Sigmoid colon (tissue), 7 donors: ENCODE measurements at regions of chr2 and their contacts with region 1.

Region 1: DNA sequence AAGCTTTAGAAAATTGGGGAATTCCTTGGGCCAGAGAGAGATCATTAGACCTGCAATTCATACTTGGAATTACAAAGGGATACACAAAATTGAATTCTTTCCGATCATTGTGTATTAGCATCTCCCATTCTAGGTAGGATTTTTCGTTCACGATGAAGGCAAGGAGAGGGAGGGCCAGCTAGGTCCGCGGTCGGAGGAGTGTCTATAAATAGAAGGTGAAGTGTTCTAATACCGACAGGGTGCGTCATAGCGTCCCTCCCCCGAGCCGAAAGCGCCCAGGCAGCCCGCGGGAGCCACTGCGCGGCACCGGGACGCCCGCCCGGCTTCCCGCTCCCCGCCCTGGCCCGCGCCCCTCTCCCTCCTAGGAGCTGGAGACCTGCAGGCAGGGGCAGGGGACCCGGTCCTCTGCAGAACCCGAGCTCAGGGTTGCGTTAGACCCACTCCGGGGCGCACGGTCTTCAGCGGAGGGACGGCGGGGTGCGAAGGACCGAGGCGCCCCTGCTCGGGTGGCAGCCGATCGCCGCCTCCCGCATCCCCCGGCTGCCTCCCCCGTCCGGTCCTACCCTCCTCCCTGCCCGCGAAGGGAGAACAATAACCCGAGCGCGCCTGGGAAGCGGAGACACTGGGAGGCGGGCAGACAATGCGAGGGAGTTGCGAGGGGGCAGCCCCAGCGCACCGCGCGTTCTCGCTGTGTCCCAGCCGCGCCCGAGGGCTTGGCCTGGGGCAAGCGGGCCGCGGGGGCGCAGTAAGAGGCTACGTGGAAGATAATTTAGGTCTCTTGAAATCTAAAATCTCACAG is 114.2 kb upstream of the SERTAD2 start:
- DNase-seq: peak; percentile 97
- H3K4me3 ChIP-seq: peak overlapping the region; percentile 60 to 69 (median 65)
- H3K27ac ChIP-seq: peak overlapping the region; percentile 92 to 98 (median 96)
- H3K4me1 ChIP-seq: peaks cover 0 to 58% (median 27%) of the 10 kb centered on the region in 4 donors
- H3K27me3 ChIP-seq: no peaks in the 10 kb centered on the region
- CTCF ChIP-seq: no peak
- EP300 ChIP-seq: peak in 2 of 4 donors; percentile 6 to 21
- POLR2A ChIP-seq: peak; percentile 88 to 90

Region 2: GRCh38 chr2:64644177-64645004 is 123.5 kb before region 1 on chr2:
- intact Hi-C with region 1: loop called (anchors 2 kb)
- DNase-seq: peak; percentile 92
- H3K4me3 ChIP-seq: peak overlapping the region; percentile 31 to 52 (median 46)
- H3K27ac ChIP-seq: peak overlapping the region; percentile 90 to 93 (median 91)
- H3K4me1 ChIP-seq: peaks cover 0 to 68% (median 57%) of the 10 kb centered on the region in 4 donors
- H3K27me3 ChIP-seq: no peaks in the 10 kb centered on the region
- CTCF ChIP-seq: no peak
- EP300 ChIP-seq: no peak
- POLR2A ChIP-seq: peak; percentile 77 to 91

Region 3: DNA sequence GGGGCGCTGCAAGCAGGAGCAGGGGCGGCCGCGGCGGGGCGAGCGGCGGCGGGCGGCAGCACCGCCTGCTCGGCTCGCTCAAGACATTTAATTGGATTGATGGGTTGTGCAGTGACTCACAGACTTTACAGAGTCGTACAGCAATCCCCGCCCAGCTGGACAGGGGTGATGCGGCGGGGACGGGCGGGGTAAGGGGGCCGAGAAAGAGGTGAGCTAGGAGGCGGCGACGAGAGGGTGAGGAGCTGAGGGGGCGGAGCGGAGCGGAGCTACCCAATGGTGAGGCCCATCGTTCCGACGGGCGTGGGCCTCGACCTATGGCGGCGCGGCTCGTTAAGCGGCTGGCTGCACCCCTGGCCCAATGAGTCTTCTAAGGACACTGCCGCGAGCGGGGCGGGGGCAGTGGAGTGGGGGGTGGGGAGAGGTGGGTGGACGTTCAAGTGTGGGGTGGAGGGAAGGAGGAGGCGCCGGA is 17.0 kb before region 1 on chr2:
- intact Hi-C with region 1: loop called (anchors 1 kb)
- DNase-seq: peak; percentile 100
- H3K4me3 ChIP-seq: peak overlapping the region; percentile 67 to 78 (median 72)
- H3K27ac ChIP-seq: peak overlapping the region; percentile 94 to 98 (median 98)
- H3K4me1 ChIP-seq: peaks cover 0 to 26% (median 14%) of the 10 kb centered on the region in 4 donors
- H3K27me3 ChIP-seq: no peaks in the 10 kb centered on the region
- CTCF ChIP-seq: no peak
- EP300 ChIP-seq: peak in 2 of 4 donors; percentile 3 to 15
- POLR2A ChIP-seq: peak; percentile 98 to 99

Region 4: GRCh38 chr2:64831134-64831976 is 63.5 kb after region 1 on chr2:
- intact Hi-C with region 1: loop called (anchors 5 kb)
- DNase-seq: peak; percentile 89
- H3K4me3 ChIP-seq: no peak overlapping the region
- H3K27ac ChIP-seq: peak overlapping the region; percentile 30 to 67 (median 57)
- H3K4me1 ChIP-seq: no peaks in the 10 kb centered on the region
- H3K27me3 ChIP-seq: no peaks in the 10 kb centered on the region
- CTCF ChIP-seq: peak; percentile 38 to 84 (median 68)
- EP300 ChIP-seq: no peak
- POLR2A ChIP-seq: no peak

Region 5: DNA sequence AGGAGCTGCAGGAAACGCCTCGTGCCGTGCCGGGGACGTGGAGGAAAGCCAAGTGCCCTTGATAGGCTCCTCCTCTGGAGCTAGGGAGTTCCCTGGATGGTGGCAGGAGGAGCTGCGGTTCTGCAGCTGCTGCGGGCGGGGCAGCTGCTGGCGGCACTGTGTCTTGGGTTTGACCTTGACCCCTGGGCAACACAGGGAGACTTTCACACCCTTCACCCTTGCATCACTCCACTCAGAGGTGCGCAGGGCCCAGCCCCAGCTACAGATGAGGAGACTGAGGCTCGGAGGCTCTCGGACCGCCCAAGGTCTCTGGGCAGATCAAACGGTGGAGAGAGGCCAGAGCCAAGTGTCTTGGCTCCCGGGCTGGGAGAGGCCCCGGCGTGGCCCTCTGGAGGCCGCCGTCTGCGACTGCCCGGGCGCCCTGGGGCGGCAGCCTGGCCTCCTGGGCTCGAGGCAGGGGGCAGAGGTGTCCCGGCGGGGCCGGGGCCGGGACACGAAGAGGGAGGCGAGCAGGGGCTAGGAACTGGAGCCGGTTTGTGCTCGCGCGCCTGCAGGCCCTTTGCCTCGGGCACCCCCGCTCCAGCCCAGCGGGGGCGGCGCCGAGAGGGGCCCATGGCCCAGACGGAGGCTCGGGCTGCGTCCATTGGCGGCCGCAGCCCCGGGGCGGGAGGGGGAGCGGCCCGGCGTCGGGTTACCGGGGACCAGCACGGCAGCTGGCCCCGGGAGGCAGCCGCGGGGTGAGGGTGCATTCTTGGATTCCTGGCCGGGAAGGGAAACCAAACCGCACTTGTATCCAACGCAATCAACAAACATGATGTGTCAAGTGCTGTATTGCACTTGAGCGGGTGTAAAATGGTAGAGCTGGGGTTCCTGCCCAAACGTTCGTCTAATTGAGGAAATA is 91.7 kb after region 1 on chr2:
- intact Hi-C with region 1: loop called (anchors 1 kb)
- DNase-seq: peak; percentile 97
- H3K4me3 ChIP-seq: peak overlapping the region; percentile 26 to 57 (median 48)
- H3K27ac ChIP-seq: peak overlapping the region; percentile 91 to 97 (median 96)
- H3K4me1 ChIP-seq: peaks cover 0 to 47% (median 40%) of the 10 kb centered on the region in 4 donors
- H3K27me3 ChIP-seq: no peaks in the 10 kb centered on the region
- CTCF ChIP-seq: peak in 1 of 4 experiments; percentile 23
- EP300 ChIP-seq: peak in 1 of 4 donors; percentile 20
- POLR2A ChIP-seq: peak in 1 of 2 donors; percentile 23